Activated T-helper 2 cell treated with anti-CD3 and anti-CD28 coated beads, Interferon-gamma antibody, Interleukin-2, Interleukin-4, amounts not matched to agents 10 μg/mL and 5 μg/mL and 100 μg/mL, durations not matched to agents 14 hours and 24 hours and 36 hours (primary cell): ENCODE measurements at regions of chr3 and their contacts with region 1.

Region 1: GRCh38 chr3:150737874-150738713 is 24.9 kb downstream of the SIAH2 start:
- DNase-seq: no peak
- H3K4me3 Mint-ChIP-seq: peak overlapping the region; percentile 53
- H3K27ac Mint-ChIP-seq: peak overlapping the region; percentile 100
- H3K4me1 Mint-ChIP-seq: peaks cover 91% of the 10 kb centered on the region
- H3K27me3 Mint-ChIP-seq: no peaks in the 10 kb centered on the region

Region 2: GRCh38 chr3:150546226-150547044 is 191.7 kb before region 1 on chr3 and contains the starts of genes EIF2A and SERP1:
- intact Hi-C with region 1: no loop called
- DNase-seq: peak; percentile 100
- H3K4me3 Mint-ChIP-seq: peak within 1 kb of the TSS; percentile 97
- H3K27ac Mint-ChIP-seq: peak within 1 kb of the TSS; percentile 92
- H3K4me1 Mint-ChIP-seq: peaks cover 56% of the 10 kb centered on the region
- H3K27me3 Mint-ChIP-seq: no peaks in the 10 kb centered on the region
- total RNA-seq, gene EIF2A: 124 and 126 TPM in 2 replicates
- total RNA-seq, gene SERP1: 89.2 and 91.7 TPM in 2 replicates

Region 3: GRCh38 chr3:150751753-150752263 is 13.7 kb after region 1 on chr3:
- intact Hi-C with region 1: loop called (anchors 1 kb)
- DNase-seq: no peak
- H3K4me3 Mint-ChIP-seq: no peak overlapping the region
- H3K27ac Mint-ChIP-seq: peak overlapping the region; percentile 79
- H3K4me1 Mint-ChIP-seq: peaks cover 75% of the 10 kb centered on the region
- H3K27me3 Mint-ChIP-seq: no peaks in the 10 kb centered on the region

Region 4: DNA sequence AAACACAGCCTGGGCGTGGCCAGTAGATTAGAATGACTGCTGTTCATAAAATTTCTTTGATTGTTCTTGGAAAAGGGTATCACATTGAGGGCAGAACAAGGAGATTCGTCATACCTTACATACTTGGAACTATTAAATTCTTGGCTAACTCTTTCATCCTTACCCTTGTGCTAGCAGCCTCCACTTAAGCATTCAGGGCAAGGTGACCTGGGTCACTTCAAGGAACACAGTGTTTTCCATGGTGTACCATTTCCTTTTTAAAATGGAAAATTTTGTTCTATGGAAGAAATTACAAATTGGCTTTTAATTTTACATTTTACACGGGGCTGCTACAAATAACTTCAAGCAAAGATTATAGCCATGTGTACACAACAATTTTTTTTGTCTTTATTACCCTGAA is 106.4 kb after region 1 on chr3:
- intact Hi-C with region 1: no loop called
- DNase-seq: no peak
- H3K4me3 Mint-ChIP-seq: no peak overlapping the region
- H3K27ac Mint-ChIP-seq: no peak overlapping the region
- H3K4me1 Mint-ChIP-seq: peaks cover 2% of the 10 kb centered on the region
- H3K27me3 Mint-ChIP-seq: peaks cover 16% of the 10 kb centered on the region

Region 5: DNA sequence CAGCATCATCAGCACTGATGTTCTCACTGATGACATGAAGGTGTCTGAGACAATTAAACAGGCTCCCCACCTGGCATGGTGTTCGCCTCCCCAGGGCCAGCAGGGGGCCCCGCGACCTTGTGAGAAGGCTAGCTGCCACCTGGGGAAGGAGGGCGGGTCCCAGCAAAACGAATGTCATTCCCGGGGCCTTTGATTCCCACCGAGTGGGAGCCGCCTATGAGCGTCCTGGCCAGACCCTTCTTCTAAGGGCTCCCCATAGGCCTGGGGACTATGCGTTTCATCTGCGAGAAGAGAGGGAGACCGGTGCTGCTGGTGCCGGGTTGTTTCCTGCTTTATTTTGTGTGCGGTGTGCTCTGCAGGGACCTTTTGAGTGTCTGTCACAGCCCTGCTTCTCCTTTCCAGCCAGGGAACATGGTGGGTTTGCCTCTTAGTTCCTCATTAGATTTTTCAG is 187.7 kb after region 1 on chr3:
- intact Hi-C with region 1: no loop called
- DNase-seq: peak; percentile 41
- H3K4me3 Mint-ChIP-seq: peak overlapping the region; percentile 45
- H3K27ac Mint-ChIP-seq: no peak overlapping the region
- H3K4me1 Mint-ChIP-seq: no peaks in the 10 kb centered on the region
- H3K27me3 Mint-ChIP-seq: peaks cover 9% of the 10 kb centered on the region